ENCODE measurements at regions of chr12 and their contacts with region 1.

Region 1: GRCh38 chr12:70733385-70733784 is 96.2 kb upstream of the PTPRB start:
- DNase-seq: no peak
- ATAC-seq: peak; percentile 64

Region 2: DNA sequence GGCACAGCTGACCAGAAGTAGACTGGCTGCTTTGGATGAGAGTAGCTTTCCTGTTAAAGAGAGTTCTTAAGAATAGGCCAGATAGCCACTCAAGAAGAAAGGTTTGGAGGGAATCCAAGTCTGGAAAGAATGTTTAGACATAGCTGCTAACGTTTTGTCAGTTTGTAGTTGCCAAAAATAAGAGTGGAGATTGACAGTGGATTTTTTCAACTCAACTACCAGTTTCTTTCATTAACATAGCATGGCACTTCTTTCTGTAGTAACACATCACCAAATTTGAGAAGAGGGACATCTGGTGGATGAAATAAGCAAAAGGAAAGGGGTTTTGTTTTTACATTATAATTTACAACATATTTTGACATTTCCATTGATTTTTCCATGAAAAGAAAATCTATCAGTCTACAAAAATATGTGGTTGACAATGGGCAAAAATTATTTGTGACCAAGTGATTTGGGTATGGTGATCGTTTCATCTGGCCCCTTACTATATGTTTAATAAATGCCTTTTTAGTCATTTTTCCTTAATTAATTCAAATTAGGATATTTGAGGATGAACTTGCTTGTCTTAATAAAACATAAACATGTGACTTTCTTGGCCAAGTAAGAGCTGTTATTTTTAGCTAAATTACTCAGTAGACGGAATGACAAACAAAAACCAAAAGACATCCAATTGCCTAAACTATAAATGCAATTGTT is 116.0 kb after region 1 on chr12:
- intact Hi-C with region 1: loop called (anchors 10 kb)
- DNase-seq: no peak
- ATAC-seq: no peak

Region 3: GRCh38 chr12:70982991-70983390 is 249.6 kb after region 1 on chr12:
- intact Hi-C with region 1: no loop called
- DNase-seq: no peak
- ATAC-seq: no peak

Region 4: GRCh38 chr12:71014180-71014785 is 280.9 kb after region 1 on chr12:
- intact Hi-C with region 1: loop called (anchors 10 kb)
- DNase-seq: no peak
- ATAC-seq: peak; percentile 41